HEK293 (cell line): ENCODE measurements at regions of chr14 and their contacts with region 1.

Region 1: GRCh38 chr14:20343092-20343861 is at the start of gene PARP2:
- H3K4me3 ChIP-seq: peak within 1 kb of the TSS; percentile 89
- H3K27ac ChIP-seq: peak within 1 kb of the TSS; percentile 93
- H3K4me1 ChIP-seq: 0 out of 2 replicates have a peak, but pooled peaks cover 4% of the 10 kb centered on the region
- CTCF ChIP-seq: peak; percentile 23; the same call in 1 of the 2 replicates

Region 2: GRCh38 chr14:20262642-20263128 is 80.6 kb before region 1 on chr14:
- CTCF ChIA-PET with region 1: no interaction called
- POLR2A ChIA-PET with region 1: no interaction called
- H3K4me3 ChIP-seq: no peak overlapping the region
- H3K27ac ChIP-seq: no peak overlapping the region
- H3K4me1 ChIP-seq: no peaks in the 10 kb centered on the region
- CTCF ChIP-seq: no peak

Region 3: DNA sequence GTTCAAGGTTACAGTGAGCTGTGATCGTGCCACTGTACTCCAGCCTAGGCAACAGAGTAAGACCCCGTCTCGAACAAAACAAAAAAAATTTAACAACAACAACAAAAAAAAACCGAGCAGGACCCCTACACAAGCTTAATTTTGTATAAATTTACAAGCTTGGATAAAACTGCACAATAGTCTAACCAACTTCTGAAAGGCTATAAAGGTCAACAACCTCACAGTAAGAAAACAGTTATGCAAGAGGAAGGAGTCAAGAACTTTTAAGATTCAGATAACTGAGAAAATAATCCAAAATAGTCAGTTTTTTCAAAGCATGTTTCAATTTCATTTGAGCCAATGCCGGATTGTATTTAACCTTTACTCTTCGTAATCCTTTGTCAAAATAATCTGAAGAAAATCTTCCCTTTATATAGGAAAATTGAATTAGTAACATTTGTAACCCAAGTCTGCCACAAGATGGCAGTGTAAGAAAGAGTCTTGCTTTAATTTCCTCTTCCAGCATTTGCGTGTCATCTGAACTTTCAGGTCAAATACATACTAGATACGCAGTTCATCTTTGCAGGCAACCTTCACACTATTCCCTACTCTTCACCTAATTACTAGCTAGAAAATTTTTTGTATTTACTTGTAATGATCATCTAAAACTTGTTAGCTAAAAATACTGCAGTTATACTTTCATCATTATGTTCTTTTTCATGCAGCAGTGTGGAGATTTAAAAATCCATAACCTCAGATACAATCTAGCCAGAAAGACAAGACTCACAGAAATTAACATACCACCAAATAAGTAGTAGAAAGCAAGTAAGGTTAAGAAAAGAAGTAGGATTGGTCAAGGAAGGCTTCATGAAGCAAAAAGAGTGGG is 16.0 kb before region 1 on chr14:
- CTCF ChIA-PET with region 1: interaction called, 67 read pairs
- POLR2A ChIA-PET with region 1: interaction called, 57 read pairs
- H3K4me3 ChIP-seq: no peak overlapping the region
- H3K27ac ChIP-seq: no peak overlapping the region
- H3K4me1 ChIP-seq: peaks cover 6% of the 10 kb centered on the region; the same call in 1 of the 2 replicates
- CTCF ChIP-seq: 0 out of 2 replicates have a peak, but pooled peaks have one; percentile 24

Region 4: GRCh38 chr14:20413045-20413799 is 69.9 kb after region 1 on chr14 and contains the start of gene TEP1:
- CTCF ChIA-PET with region 1: interaction called, 5 read pairs
- POLR2A ChIA-PET with region 1: interaction called, 32 read pairs
- H3K4me3 ChIP-seq: peak within 1 kb of the TSS; percentile 85
- H3K27ac ChIP-seq: peak within 1 kb of the TSS; percentile 79
- H3K4me1 ChIP-seq: peaks cover 16% of the 10 kb centered on the region
- CTCF ChIP-seq: no peak

Region 5: DNA sequence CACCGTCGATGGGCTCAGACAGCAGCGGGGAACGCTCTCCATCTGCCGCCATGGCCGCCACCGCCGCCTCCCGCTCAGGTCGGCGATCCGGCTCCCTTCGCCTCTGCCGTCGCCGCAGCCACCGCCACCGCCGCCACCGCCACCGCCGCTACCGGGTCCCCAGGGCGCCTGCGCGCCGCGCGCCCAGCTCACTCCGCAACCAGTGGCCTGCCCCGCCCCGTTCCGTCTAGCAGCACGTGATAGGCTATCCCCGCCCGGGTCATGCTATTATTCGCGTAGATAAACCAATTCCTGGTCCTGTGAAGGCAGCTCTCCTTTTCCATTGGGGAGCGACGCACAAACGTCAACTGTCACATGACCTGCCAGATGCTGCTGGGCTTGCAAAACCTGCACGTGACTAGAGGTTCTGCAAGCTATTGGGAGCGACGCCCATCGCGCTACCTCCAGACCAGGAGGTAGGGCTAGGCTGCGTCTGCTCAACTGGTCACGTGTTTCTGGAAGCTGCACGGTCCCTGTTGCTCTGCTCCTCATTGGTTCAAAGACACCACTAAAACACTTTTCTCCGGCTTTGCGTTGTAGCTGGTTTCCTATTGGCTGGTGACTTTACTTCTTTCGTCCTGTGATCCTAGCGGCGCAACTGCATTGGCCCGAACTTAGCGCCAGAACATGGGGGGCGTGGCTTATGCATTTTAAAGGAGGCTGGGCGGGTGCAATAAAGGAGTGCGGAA is 118.2 kb after region 1 on chr14 and contains the start of gene PIP4P1:
- CTCF ChIA-PET with region 1: interaction called, 3 read pairs
- POLR2A ChIA-PET with region 1: interaction called, 55 read pairs
- H3K4me3 ChIP-seq: peak within 1 kb of the TSS; percentile 85
- H3K27ac ChIP-seq: peak within 1 kb of the TSS; percentile 83
- H3K4me1 ChIP-seq: peaks cover 10% of the 10 kb centered on the region
- CTCF ChIP-seq: no peak

Region 6: DNA sequence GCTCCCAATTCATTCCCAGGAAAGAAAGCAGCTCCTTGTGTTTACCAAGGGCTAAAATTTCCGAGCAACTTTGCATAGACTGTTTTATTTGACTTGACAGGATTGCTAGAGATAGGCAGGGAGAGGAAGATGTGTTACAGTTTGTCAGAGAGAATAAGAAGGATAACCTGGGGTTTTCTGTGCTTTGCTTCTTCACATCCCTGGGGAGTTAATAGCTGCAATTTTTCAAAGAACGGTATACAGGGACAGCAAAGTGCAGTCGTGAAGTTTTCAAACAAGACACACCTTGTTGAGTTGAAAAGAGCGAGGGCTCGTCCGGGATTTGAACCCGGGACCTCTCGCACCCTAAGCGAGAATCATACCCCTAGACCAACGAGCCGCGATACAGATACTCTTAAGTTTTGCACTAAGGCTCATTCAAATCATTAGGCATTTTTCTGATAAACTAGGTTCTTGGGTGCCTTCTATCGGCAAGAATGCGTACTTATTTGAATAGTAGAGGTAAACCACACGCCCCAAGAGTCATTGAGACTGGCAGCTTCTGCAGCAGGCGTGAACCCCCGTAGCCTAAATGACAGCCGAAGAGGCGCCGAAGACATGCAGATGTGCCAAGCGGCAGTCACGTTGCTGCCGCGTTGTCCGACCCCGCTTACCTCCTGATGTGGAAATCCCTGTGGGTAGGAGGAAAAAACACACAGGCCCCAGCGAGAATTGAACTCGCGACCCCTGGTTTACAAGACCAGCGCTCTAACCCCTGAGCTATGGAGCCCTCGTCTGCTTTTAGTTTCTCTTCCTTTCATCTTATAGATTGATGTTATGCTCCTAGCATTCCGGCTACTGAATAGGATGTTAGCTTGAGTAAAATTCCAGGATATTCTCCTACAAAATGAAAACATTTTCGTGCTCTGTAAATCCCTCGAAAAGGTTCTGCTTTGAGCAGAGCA is 270.1 kb after region 1 on chr14:
- CTCF ChIA-PET with region 1: interaction called, 3 read pairs
- POLR2A ChIA-PET with region 1: interaction called, 11 read pairs
- H3K4me3 ChIP-seq: peak overlapping the region; percentile 81
- H3K27ac ChIP-seq: peak overlapping the region; percentile 74
- H3K4me1 ChIP-seq: peaks cover 13% of the 10 kb centered on the region
- CTCF ChIP-seq: peak; percentile 88